ENCODE measurements at regions of chr18 and their contacts with region 1.

Region 1: DNA sequence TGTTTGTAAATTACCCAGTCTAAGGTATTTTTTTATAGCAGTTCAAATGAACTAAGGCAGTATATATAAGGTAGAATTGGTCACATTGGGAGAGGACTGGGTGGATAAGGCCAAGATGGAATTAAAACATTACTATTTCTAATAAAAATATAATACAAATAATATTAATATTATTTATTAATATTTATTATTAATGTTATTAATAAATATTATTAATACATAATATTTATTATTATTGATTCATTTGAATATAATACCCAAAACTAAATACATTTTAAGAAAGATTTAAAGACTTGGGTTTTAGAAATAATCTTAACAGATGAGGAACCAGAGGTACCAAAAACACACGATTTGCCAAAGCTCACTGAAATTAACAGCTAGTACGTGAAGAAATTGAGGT is 30.5 kb upstream of the MC2R start:
- DNase-seq: no peak
- ATAC-seq: no peak
- H3K4me3 ChIP-seq: no peak overlapping the region
- H3K27ac ChIP-seq: no peak overlapping the region
- H3K4me1 ChIP-seq: no peaks in the 10 kb centered on the region
- H3K27me3 ChIP-seq: no peaks in the 10 kb centered on the region

Region 2: GRCh38 chr18:13895505-13896033 is 50.2 kb before region 1 on chr18:
- intact Hi-C with region 1: no loop called
- DNase-seq: no peak
- ATAC-seq: no peak
- H3K4me3 ChIP-seq: no peak overlapping the region
- H3K27ac ChIP-seq: no peak overlapping the region
- H3K4me1 ChIP-seq: no peaks in the 10 kb centered on the region
- H3K27me3 ChIP-seq: no peaks in the 10 kb centered on the region

Region 3: DNA sequence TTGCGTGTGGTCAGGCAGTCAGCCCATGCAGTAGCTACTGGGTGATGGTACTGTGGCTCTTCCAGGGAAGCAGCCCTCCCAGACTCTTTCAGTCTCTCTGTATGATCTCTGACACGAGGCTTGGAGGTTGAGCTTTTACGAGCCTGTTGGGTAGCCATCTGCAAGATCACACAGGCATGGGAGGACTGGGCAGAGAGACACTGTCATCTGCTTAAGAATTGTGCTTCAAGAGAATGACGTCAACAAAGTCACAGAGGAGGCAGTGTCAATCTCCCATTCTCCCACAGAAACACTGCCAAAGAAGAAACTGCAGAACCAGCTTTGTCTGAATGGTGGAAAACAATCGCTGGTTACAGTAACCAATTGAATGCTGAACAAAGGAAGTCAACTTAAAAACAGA is 47.9 kb after region 1 on chr18:
- intact Hi-C with region 1: loop called in 1 of 2 experiments (anchors 2 kb)
- DNase-seq: no peak
- ATAC-seq: no peak
- H3K4me3 ChIP-seq: no peak overlapping the region
- H3K27ac ChIP-seq: no peak overlapping the region
- H3K4me1 ChIP-seq: no peaks in the 10 kb centered on the region
- H3K27me3 ChIP-seq: no peaks in the 10 kb centered on the region

Measured in aorta (tissue), 5 donors.